Tibial artery (tissue), 4 donors: ENCODE measurements at regions of chr2 and their contacts with region 1.

Region 1: GRCh38 chr2:102063941-102064678 is 72.3 kb downstream of the IL1R2 start:
- DNase-seq: peak; percentile 96
- H3K4me3 ChIP-seq: peak overlapping the region in 1 of 2 donors; percentile 20
- H3K27ac ChIP-seq: peak overlapping the region; percentile 88 to 95
- H3K4me1 ChIP-seq: peaks cover 5 to 79% (median 62%) of the 10 kb centered on the region in 4 donors
- H3K27me3 ChIP-seq: no peaks in the 10 kb centered on the region
- CTCF ChIP-seq: no peak

Region 2: GRCh38 chr2:101912545-101912944 is 151.6 kb before region 1 on chr2:
- intact Hi-C with region 1: no loop called
- DNase-seq: no peak
- H3K4me3 ChIP-seq: no peak overlapping the region
- H3K27ac ChIP-seq: no peak overlapping the region
- H3K4me1 ChIP-seq: no peaks in the 10 kb centered on the region
- H3K27me3 ChIP-seq: no peaks in the 10 kb centered on the region
- CTCF ChIP-seq: no peak

Region 3: DNA sequence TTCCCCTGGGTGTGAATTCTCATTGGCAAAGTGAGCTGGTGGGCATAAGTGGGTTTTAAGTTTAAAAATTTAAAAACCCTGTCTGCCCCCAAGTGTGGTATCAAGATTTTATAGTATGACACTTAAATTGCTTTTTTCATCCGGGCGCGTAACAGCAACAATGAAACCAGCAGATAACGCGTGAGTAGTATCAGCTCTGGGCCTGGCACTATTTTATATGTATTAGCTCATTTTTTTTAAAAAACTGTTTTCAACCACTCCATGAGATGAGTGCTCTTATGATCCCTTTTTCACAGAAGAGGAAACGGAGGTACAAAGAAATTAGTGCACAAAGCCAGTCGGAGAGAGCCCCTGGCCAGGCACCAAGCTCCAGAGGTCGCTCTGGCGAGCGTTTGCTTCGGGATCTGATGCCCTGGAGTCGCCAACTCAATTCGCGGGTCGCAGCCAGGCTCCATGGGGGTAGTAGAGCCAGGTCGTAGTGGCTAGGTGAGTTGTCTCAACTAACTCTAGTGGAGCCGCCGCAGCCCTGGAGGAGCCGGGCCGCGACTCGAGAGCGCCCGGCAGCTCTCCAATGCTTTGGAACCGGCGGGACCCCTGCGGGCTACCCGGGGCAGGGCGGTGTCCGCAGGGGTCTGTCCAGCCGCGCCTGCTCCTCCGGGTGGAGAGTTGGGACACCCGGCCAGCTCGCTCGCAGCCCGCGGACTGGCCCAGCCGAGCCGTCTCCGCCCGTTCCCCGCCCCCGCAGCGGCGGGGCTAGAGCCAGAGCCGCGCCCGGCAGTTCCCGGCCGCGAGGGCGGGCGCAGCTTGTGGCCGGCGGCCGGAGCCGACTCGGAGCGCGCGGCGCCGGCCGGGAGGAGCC is 78.1 kb after region 1 on chr2 and contains the start of gene IL1R1:
- intact Hi-C with region 1: loop called (anchors 10 kb)
- DNase-seq: peak; percentile 78 to 91
- H3K4me3 ChIP-seq: peak within 1 kb of the TSS; percentile 66 to 69
- H3K27ac ChIP-seq: peak within 1 kb of the TSS; percentile 87 to 91
- H3K4me1 ChIP-seq: peaks cover 0 to 12% (median 6%) of the 10 kb centered on the region in 4 donors
- H3K27me3 ChIP-seq: no peaks in the 10 kb centered on the region
- CTCF ChIP-seq: no peak